Caco-2 (cell line): ENCODE measurements at regions of chr1 and their contacts with region 1.

Region 1: DNA sequence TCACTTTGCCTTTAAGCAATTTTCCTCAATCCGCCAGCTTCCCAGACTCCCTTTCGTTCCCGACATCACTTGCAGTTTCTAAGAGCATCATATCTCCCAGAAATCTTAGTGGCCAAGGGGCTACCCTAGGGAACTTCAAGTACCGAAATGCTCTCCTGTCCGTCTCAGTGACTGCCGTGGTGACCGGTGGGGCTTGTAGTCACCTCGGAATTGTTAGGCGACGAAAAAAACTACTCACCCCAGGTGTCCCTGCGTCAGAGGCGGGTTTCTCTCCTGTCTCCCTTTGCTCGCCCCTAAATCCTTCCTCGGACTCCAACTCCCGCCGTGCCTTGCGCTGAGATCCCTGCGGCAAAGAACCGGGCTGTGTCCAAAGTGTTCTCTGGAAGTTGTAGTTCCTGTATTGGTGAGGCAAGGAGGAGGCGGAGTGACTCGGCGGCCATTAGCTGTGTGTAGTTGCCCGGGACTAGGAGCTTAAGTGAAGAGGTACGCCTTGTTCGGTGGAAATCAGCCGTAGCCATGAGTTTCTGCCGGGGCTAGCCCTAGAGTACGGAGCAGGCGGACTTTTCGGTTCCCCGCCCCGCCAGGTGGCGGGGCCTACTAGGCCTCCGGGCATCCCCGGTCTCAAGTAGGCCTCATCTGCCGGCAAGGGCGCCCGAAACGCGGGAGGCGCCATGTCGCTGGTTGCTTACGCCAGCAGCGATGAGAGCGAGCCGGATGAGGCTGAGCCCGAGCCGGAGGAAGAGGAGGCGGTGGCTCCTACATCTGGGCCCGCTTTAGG is at the start of gene PRCC:
- DNase-seq: peak; percentile 98 to 99
- H3K4me3 ChIP-seq: peak within 1 kb of the TSS; percentile 93
- H3K4me3 Mint-ChIP-seq: no peak within 1 kb of the TSS
- H3K27ac Mint-ChIP-seq: no peak within 1 kb of the TSS
- H3K4me1 ChIP-seq: peaks cover 8% of the 10 kb centered on the region; the same call in 1 of the 2 replicates
- H3K4me1 Mint-ChIP-seq: peaks cover 39% of the 10 kb centered on the region
- H3K27me3 ChIP-seq: no peaks in the 10 kb centered on the region
- H3K27me3 Mint-ChIP-seq: no peaks in the 10 kb centered on the region
- CTCF ChIP-seq: no peak
- total RNA-seq, gene PRCC: 94.4 and 101 TPM in 2 replicates

Region 2: GRCh38 chr1:156740679-156741612 is 26.3 kb before region 1 on chr1 and contains the start of gene MRPL24:
- CTCF ChIA-PET with region 1: interaction called, 5 read pairs
- POLR2A ChIA-PET with region 1: interaction called, 26 read pairs
- intact Hi-C with region 1: loop called (anchors 1 kb)
- DNase-seq: peak; percentile 97 to 99
- H3K4me3 ChIP-seq: peak within 1 kb of the TSS; percentile 62
- H3K4me3 Mint-ChIP-seq: peak within 1 kb of the TSS; percentile 100
- H3K27ac Mint-ChIP-seq: peak within 1 kb of the TSS; percentile 98
- H3K4me1 ChIP-seq: peaks cover 16% of the 10 kb centered on the region
- H3K4me1 Mint-ChIP-seq: peaks cover 25% of the 10 kb centered on the region
- H3K27me3 ChIP-seq: no peaks in the 10 kb centered on the region
- H3K27me3 Mint-ChIP-seq: no peaks in the 10 kb centered on the region
- CTCF ChIP-seq: no peak
- total RNA-seq, gene MRPL24: 52.6 and 54.2 TPM in 2 replicates

Region 3: GRCh38 chr1:156746728-156747631 is 20.3 kb before region 1 on chr1:
- CTCF ChIA-PET with region 1: interaction called, 4 read pairs
- POLR2A ChIA-PET with region 1: interaction called, 28 read pairs
- intact Hi-C with region 1: loop called (anchors 1 kb)
- DNase-seq: peak; percentile 98
- H3K4me3 ChIP-seq: peak overlapping the region; percentile 47
- H3K4me3 Mint-ChIP-seq: peak overlapping the region; percentile 79
- H3K27ac Mint-ChIP-seq: peak overlapping the region; percentile 100
- H3K4me1 ChIP-seq: peaks cover 38% of the 10 kb centered on the region
- H3K4me1 Mint-ChIP-seq: peaks cover 33% of the 10 kb centered on the region
- H3K27me3 ChIP-seq: no peaks in the 10 kb centered on the region
- H3K27me3 Mint-ChIP-seq: no peaks in the 10 kb centered on the region
- CTCF ChIP-seq: peak; percentile 14 to 35

Region 4: DNA sequence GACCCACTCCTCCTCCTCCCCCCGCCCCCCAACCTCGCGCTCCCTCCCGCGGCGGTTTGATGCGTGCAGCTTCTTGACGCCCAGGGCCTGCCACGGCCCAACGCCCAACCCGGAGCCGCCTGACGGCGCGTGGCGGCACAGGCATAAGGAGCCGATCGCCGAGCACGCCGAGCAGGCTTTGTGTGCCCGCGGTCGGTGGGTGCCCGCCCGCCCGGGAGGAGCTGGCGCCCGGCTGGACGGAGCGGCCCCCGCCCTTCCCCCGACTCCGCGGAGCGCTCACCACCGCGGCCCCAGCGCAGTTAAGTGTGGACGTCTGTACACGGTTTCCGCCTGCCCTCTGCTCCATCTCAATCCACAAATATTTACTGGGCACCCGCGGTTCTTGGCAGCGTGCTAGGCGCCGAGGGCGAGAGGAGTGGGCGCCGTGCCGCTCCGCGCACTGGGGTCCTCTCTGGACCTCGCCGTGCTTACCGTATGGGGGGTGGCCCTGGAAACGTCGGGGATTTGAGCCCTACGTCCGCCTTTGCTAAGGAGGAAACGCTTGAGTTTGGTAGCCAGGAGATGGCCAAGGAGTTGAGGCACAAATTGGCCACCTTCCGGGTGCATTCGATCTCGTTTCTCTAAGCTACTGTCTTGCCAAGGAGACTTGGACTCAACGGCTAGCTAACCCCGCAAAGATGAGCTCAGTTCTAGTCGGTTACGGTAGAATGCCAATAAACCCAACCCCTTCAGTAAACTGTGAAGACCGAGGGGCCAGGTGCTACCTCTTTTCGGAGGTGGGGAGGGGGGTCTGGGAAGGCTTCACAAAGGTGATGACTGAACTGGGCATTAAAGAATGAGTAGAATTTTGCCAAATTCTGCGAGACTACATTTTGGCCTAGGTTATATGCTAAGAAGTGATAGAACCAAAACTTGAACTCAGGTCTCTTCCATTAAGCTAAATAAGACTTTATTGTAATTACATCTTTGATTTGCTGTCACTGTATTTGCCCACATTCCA is 15.2 kb before region 1 on chr1:
- CTCF ChIA-PET with region 1: interaction called, 4 read pairs
- POLR2A ChIA-PET with region 1: interaction called, 28 read pairs
- intact Hi-C with region 1: loop called (anchors 1 kb)
- DNase-seq: peak; percentile 96 to 99
- H3K4me3 ChIP-seq: peak overlapping the region; percentile 55
- H3K4me3 Mint-ChIP-seq: peak overlapping the region; percentile 79
- H3K27ac Mint-ChIP-seq: peak overlapping the region; percentile 100
- H3K4me1 ChIP-seq: peaks cover 34% of the 10 kb centered on the region
- H3K4me1 Mint-ChIP-seq: peaks cover 21% of the 10 kb centered on the region
- H3K27me3 ChIP-seq: no peaks in the 10 kb centered on the region
- H3K27me3 Mint-ChIP-seq: no peaks in the 10 kb centered on the region
- CTCF ChIP-seq: peak in 1 of 2 experiments; percentile 23

Region 5: DNA sequence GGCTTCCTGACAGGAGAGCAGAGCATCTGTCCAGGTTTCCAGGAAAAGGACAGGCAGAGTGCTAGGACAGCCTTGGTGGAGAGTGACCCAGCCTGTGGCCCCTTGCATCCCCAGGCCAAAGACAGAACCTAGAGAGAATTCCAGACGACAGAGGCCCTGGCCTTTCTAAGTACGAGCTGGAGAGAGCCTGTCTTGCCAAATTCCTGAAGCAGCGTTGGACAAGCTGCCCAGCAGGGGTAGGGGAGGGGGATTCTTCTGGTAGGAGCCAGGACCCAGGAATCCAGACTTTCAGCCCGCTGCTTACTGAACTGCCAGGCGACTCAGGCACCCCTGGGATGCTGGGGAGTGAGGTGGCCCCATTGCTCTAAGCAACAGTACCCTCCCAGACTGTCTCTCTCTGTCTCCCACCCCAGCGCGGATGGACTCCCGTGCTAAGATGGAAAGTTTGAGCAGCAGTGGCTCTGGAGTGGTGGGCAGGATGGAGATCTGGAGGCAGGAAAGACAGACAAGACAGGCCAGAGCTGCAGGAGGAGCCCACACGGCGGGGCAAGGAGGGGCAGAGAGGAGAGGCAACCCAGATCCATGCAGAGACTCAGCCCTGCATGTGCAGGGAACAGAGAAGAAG is 117.4 kb after region 1 on chr1:
- CTCF ChIA-PET with region 1: no interaction called
- POLR2A ChIA-PET with region 1: no interaction called
- intact Hi-C with region 1: no loop called
- DNase-seq: no peak
- H3K4me3 ChIP-seq: no peak overlapping the region
- H3K4me3 Mint-ChIP-seq: no peak overlapping the region
- H3K27ac Mint-ChIP-seq: no peak overlapping the region
- H3K4me1 ChIP-seq: no peaks in the 10 kb centered on the region
- H3K4me1 Mint-ChIP-seq: no peaks in the 10 kb centered on the region
- H3K27me3 ChIP-seq: no peaks in the 10 kb centered on the region
- H3K27me3 Mint-ChIP-seq: peaks cover 11% of the 10 kb centered on the region
- CTCF ChIP-seq: no peak